BJ (cell line): ENCODE measurements at regions of chr12 and their contacts with region 1.

Region 1: DNA sequence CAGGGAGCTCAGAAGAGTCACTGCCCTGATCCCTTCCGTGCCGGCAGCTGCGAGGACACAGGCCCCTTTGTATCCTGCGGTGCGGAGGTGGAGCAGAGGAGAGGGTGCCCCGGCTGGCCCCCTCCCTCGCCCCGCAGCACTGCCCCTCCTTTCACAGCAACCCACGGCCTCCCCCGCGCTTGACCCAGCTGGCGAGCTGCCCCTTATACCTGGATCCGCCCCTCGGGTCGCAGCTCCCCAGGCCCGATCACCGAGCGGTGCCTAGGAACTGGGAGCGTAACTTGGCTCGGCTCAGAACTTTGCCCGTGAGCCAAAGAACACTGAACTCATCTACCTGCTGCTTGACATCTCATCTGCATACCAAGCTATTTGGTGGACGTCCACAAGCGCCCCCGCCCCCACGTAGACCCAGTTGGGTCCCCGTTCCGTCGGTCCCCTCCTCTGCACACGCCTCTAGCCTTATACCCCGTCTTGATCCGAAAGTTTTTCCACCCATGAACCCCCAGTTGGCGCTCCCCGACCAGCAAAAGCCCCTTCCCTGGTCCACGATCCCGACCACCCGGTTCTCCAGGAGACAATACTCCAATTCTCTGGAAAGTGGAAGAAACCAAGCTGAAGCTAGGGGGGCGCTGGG is 697 bp upstream of the DNAJC14 start:
- DNase-seq: no peak
- H3K4me3 ChIP-seq: peak overlapping the region; percentile 84
- H3K27me3 ChIP-seq: no peaks in the 10 kb centered on the region
- CTCF ChIP-seq: no peak

Region 2: DNA sequence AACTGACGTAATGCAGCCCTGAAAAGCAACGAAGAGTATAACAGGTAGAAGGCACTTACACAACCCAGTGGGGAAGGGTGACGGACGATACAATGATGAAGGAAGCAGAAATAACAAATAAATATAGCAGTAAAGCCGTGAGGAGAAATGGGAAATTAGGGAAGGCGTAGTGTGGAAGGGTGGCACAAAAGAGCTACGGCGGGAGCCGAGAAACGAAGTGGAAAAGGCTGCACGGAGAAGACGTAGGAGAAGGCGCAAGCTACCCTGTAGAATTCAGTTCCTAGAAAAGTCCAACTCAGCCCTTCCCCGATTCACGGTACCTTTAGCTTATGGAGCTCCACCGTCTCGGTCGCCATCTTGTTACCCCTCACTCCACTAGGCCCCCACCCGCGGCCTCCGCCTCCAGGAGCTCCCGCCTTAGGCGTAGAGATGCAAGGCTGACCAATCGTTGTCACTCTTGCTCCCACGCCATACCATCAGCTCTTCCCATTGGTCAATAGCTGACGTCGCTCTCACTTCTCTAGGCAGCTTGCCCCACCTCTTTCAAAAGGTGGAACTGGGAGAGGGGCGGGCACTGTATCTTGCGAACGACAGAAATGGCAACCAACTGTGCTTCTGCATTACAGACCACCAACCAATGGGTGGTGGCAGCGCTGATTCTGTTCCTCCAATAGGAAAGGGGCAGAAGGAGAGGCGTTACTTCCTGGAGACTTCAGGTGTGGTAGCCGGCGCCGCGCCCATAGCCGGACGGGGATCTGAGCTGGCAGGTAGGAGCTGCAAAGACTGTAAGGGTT is 12.5 kb before region 1 on chr12 and contains the starts of genes ORMDL2 and SARNP:
- CTCF ChIA-PET with region 1: interaction called, 6 read pairs
- POLR2A ChIA-PET with region 1: interaction called, 30 read pairs
- DNase-seq: peak; percentile 99
- H3K4me3 ChIP-seq: peak within 1 kb of the TSS; percentile 92
- H3K27me3 ChIP-seq: no peaks in the 10 kb centered on the region
- CTCF ChIP-seq: no peak
- polyA plus RNA-seq, gene ORMDL2: 47.4 and 63.9 TPM in 2 replicates
- polyA plus RNA-seq, gene SARNP: 52.1 and 102 TPM in 2 replicates

Region 3: DNA sequence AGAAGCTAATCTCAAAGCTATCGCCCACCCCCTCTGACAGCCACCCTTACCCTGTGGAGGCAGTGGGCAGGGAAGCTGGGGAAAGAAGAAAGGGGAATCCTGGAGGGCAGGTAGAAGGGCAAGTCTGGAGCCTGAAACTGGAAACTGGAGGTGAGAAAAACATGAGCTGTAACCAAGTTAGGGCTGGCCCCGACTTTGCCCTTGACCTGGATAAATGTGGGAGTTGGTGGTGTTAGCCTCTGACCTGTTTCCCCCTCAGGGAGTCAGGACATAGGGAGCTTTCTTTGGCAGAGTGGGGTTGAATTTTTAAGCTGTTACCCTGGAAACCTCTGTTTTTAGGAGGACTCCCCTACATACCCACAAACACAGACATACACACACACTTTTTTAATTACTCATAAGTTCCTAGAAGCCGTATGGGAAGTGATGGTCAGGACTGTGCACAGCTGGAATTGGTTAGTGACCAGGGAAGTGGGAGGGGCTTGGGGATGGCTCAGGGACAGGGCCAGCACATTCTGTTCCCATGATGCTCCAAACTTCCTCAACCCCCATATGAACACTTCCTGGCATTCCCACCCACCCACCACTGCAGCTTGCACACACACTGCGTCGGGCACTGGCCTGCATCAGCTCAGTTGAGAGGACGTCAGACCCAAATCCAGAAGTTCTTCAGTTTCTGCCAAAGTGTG is 17.7 kb after region 1 on chr12:
- CTCF ChIA-PET with region 1: interaction called, 15 read pairs
- POLR2A ChIA-PET with region 1: interaction called, 16 read pairs
- DNase-seq: peak; percentile 99
- H3K4me3 ChIP-seq: peak overlapping the region; percentile 15; the same call in 1 of the 2 replicates
- H3K27me3 ChIP-seq: no peaks in the 10 kb centered on the region
- CTCF ChIP-seq: no peak

Region 4: GRCh38 chr12:55940065-55940732 is 110.1 kb after region 1 on chr12:
- CTCF ChIA-PET with region 1: interaction called, 14 read pairs
- POLR2A ChIA-PET with region 1: no interaction called
- DNase-seq: no peak
- H3K4me3 ChIP-seq: no peak overlapping the region
- H3K27me3 ChIP-seq: no peaks in the 10 kb centered on the region
- CTCF ChIP-seq: peak; percentile 95